Caco-2 (cell line): ENCODE measurements at regions of chr13 and their contacts with region 1.

Region 1: DNA sequence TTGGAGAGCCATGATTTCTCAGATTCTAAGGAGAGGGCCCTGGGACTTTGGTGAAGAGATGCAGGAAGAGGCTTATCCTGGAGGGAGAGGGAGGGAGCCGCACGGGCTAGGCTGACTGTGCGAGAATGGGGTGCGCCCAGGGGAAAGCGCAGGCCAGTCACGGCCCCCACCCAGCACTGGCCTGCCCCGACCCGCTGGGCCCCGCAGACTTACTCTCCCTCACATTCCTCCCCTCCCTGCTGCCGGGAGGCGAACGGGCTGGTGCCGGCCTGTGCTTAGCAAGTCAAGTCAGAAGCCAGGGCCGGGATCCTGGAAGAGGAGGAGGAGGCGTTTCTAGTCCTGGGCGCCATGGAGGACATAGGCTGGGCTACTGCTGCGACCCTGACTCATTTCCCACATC is 120.0 kb downstream of the CRYL1 start:
- DNase-seq: no peak
- H3K4me3 ChIP-seq: no peak overlapping the region
- H3K4me3 Mint-ChIP-seq: no peak overlapping the region
- H3K27ac Mint-ChIP-seq: no peak overlapping the region
- H3K4me1 ChIP-seq: no peaks in the 10 kb centered on the region
- H3K4me1 Mint-ChIP-seq: no peaks in the 10 kb centered on the region
- H3K27me3 ChIP-seq: no peaks in the 10 kb centered on the region; the same call in 1 of the 2 replicates
- H3K27me3 Mint-ChIP-seq: no peaks in the 10 kb centered on the region
- CTCF ChIP-seq: no peak

Region 2: DNA sequence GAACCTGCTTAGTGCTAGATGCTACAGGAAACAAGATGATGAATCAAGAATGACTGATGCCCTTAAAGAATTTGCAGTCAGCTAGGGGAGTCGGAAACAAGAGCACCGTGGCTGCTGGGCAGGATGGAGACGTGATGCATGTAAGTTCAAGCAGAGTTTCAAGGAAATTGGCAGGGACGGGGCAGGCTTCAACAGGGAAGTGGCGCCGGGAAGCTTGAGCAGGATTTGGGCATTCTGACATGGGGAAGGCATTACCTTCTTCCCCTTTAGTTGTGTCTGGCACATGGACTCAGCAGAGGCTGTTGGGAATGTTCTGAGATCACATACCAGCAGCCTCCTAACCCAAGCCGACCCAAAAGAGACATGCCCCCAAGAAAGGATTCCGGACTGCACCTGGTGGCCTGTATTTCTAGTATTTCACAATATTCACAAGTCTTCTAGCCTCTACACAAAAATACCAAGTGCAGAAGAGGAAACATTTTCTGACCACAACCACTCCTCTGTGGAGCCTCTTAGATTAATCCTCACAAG is 18.2 kb before region 1 on chr13:
- CTCF ChIA-PET with region 1: no interaction called
- POLR2A ChIA-PET with region 1: no interaction called
- intact Hi-C with region 1: loop called (anchors 2 kb)
- DNase-seq: no peak
- H3K4me3 ChIP-seq: no peak overlapping the region
- H3K4me3 Mint-ChIP-seq: no peak overlapping the region
- H3K27ac Mint-ChIP-seq: no peak overlapping the region
- H3K4me1 ChIP-seq: no peaks in the 10 kb centered on the region
- H3K4me1 Mint-ChIP-seq: no peaks in the 10 kb centered on the region
- H3K27me3 ChIP-seq: no peaks in the 10 kb centered on the region
- H3K27me3 Mint-ChIP-seq: peaks cover 11% of the 10 kb centered on the region
- CTCF ChIP-seq: no peak